Right ventricle myocardium inferior (tissue), 1 donor: ENCODE measurements at regions of chr14 and their contacts with region 1.

Region 1: GRCh38 chr14:60753264-60754119 is 18.9 kb downstream of the MNAT1 start:
- DNase-seq: no peak
- ATAC-seq: no peak

Region 2: DNA sequence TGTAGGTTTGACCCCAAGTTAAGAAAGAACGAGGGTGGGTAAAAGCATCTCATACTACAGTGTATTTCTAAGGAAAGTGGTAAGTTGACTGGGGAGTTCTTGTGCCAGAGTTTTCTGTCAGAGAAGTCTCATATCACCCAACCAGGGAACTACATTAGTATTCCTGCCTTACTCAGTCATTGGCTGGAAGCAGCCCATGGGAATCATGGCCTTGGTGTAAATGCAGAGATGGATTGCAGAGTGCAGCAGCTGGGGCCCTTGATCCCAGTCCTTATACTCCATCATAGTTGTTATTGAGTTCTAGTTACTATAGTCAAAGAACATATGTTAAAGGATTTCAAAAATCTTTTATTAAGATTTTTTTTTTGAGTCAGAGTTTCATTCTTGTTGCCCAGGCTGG is 86.8 kb after region 1 on chr14:
- intact Hi-C with region 1: no loop called
- DNase-seq: no peak
- ATAC-seq: no peak

Region 3: DNA sequence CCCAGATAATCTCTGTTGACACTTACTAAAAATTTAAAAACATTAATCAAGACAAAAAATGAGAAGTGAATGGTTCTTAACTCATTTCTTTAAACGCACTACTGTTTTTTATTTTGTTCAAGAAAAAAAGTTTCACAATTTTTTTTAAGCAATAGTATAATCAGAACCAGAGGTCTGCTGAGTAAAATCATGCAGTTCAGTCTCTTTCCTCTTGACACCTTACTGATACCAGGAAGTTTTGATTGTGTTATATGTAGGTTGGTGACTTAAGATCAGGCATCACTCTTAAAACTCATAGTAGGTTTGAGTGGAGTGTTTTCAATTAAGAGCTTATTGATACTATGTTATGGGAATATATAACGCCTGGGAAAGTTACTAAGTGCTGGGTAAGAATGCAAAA is 106.0 kb after region 1 on chr14:
- intact Hi-C with region 1: loop called (anchors 10 kb)
- DNase-seq: no peak
- ATAC-seq: no peak